Naive thymus-derived CD4-positive, alpha-beta T cell (primary cell): ENCODE measurements at regions of chr10 and their contacts with region 1.

Region 1: GRCh38 chr10:7872041-7872442 is 53.7 kb downstream of the TAF3 start:
- DNase-seq: peak in 6 of 9 donors; percentile 9 to 51 (median 44)
- ATAC-seq: peak; percentile 54
- H3K4me3 ChIP-seq: no peak overlapping the region
- H3K4me3 Mint-ChIP-seq: peak overlapping the region; percentile 8 to 84 (median 74)
- H3K27ac ChIP-seq: no peak overlapping the region
- H3K27ac Mint-ChIP-seq: peak overlapping the region in 3 of 9 donors; percentile 16 to 48 (median 41)
- H3K4me1 ChIP-seq: peaks cover 0 to 3% of the 10 kb centered on the region in 2 donors
- H3K4me1 Mint-ChIP-seq: peaks cover 6 to 61% (median 31%) of the 10 kb centered on the region in 7 donors
- H3K27me3 ChIP-seq: no peaks in the 10 kb centered on the region
- H3K27me3 Mint-ChIP-seq: no peaks in the 10 kb centered on the region

Region 2: GRCh38 chr10:8044908-8045725 is 173.1 kb after region 1 on chr10:
- CTCF ChIA-PET with region 1: no interaction called
- POLR2A ChIA-PET with region 1: no interaction called
- intact Hi-C with region 1: loop called (anchors 5 to 10 kb)
- DNase-seq: peak in 6 of 9 donors; percentile 18 to 29 (median 24)
- ATAC-seq: no peak
- H3K4me3 ChIP-seq: peak overlapping the region; percentile 26
- H3K4me3 Mint-ChIP-seq: peak overlapping the region; percentile 23 to 71 (median 59)
- H3K27ac ChIP-seq: no peak overlapping the region
- H3K27ac Mint-ChIP-seq: peak overlapping the region in 4 of 9 donors; percentile 9 to 42 (median 12)
- H3K4me1 ChIP-seq: peaks cover 56 to 59% of the 10 kb centered on the region in 2 donors
- H3K4me1 Mint-ChIP-seq: peaks cover 36 to 80% (median 64%) of the 10 kb centered on the region in 7 donors
- H3K27me3 ChIP-seq: peaks cover 54 to 86% of the 10 kb centered on the region in 2 donors
- H3K27me3 Mint-ChIP-seq: peaks cover 87 to 93% (median 90%) of the 10 kb centered on the region in 5 donors

Region 3: GRCh38 chr10:8444630-8445029 is 572.6 kb after region 1 on chr10:
- CTCF ChIA-PET with region 1: no interaction called
- POLR2A ChIA-PET with region 1: no interaction called
- intact Hi-C with region 1: loop called in 1 of 2 experiments (anchors 1 kb)
- DNase-seq: peak in 8 of 9 donors; percentile 14 to 63 (median 44)
- ATAC-seq: peak; percentile 94
- H3K4me3 ChIP-seq: no peak overlapping the region
- H3K4me3 Mint-ChIP-seq: no peak overlapping the region
- H3K27ac ChIP-seq: no peak overlapping the region
- H3K27ac Mint-ChIP-seq: peak overlapping the region in 3 of 9 donors; percentile 23 to 70 (median 65)
- H3K4me1 ChIP-seq: peaks cover 0 to 6% of the 10 kb centered on the region in 2 donors
- H3K4me1 Mint-ChIP-seq: peaks cover 0 to 17% (median 5%) of the 10 kb centered on the region in 7 donors
- H3K27me3 ChIP-seq: peaks cover 0 to 2% of the 10 kb centered on the region in 2 donors
- H3K27me3 Mint-ChIP-seq: peaks cover 0 to 36% (median 0%) of the 10 kb centered on the region in 5 donors

Region 4: GRCh38 chr10:8473205-8473604 is 601.2 kb after region 1 on chr10:
- CTCF ChIA-PET with region 1: no interaction called
- POLR2A ChIA-PET with region 1: no interaction called
- intact Hi-C with region 1: loop called (anchors 1 to 5 kb)
- DNase-seq: peak in 7 of 9 donors; percentile 8 to 61 (median 36)
- ATAC-seq: peak; percentile 51
- H3K4me3 ChIP-seq: no peak overlapping the region
- H3K4me3 Mint-ChIP-seq: no peak overlapping the region
- H3K27ac ChIP-seq: no peak overlapping the region
- H3K27ac Mint-ChIP-seq: no peak overlapping the region
- H3K4me1 ChIP-seq: no peaks in the 10 kb centered on the region
- H3K4me1 Mint-ChIP-seq: peaks cover 0 to 3% (median 0%) of the 10 kb centered on the region in 7 donors
- H3K27me3 ChIP-seq: no peaks in the 10 kb centered on the region
- H3K27me3 Mint-ChIP-seq: peaks cover 8 to 46% (median 25%) of the 10 kb centered on the region in 5 donors

Region 5: DNA sequence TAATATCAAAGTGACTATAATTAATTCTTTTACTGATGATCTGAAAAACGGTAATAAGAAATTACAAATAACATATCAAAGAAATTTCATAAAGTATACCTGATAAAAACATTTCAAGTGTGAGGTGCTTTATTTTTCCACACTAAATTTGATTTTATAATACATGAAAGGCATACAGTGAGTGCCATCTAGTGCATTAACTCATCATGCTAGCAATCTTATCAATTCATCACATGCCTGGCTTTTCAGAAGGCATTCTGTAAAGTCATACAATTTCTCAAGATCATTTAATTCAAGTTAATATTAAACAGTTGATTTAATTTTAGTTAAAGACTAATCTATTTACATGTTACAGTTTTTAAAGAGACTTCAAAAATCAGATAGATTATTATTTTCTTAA is 1203.4 kb after region 1 on chr10:
- CTCF ChIA-PET with region 1: no interaction called
- POLR2A ChIA-PET with region 1: no interaction called
- intact Hi-C with region 1: loop called in 1 of 2 experiments (anchors 2 kb)
- DNase-seq: no peak
- ATAC-seq: no peak
- H3K4me3 ChIP-seq: no peak overlapping the region
- H3K4me3 Mint-ChIP-seq: no peak overlapping the region
- H3K27ac ChIP-seq: no peak overlapping the region
- H3K27ac Mint-ChIP-seq: no peak overlapping the region
- H3K4me1 ChIP-seq: no peaks in the 10 kb centered on the region
- H3K4me1 Mint-ChIP-seq: peaks cover 0 to 5% (median 0%) of the 10 kb centered on the region in 7 donors
- H3K27me3 ChIP-seq: no peaks in the 10 kb centered on the region
- H3K27me3 Mint-ChIP-seq: peaks cover 0 to 6% (median 4%) of the 10 kb centered on the region in 5 donors

Region 6: DNA sequence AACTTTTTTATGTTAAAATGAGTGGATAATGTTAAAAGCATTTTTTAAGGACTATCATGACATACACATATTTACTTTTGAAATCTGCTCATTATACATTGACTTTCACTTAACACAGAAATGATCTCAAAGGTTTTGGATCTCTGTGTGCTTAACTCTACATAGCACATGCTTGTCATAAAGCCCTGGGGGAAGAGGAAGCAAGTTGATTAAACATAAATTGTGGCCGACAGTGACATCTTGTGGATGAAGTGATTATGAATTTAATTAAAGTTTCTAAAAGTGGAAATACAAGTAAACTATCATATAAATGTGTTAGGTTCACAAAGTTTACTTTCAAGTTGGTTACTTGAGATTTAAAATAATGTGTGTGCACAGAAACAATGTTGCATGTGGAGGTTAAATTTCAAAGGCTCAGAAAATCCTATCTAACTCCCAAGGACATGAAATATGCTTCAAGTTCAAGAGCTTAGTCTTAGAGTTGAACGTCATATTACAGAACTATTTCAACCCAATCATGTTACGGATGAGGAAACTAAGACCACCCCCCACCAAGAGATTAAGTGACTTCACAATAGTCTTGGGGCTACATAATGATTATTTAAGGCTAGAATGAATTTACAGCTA is 1430.2 kb after region 1 on chr10:
- CTCF ChIA-PET with region 1: interaction called, 3 read pairs
- POLR2A ChIA-PET with region 1: no interaction called
- intact Hi-C with region 1: loop called (anchors 1 kb)
- DNase-seq: peak in 7 of 9 donors; percentile 21 to 62 (median 53)
- ATAC-seq: peak; percentile 68
- H3K4me3 ChIP-seq: no peak overlapping the region
- H3K4me3 Mint-ChIP-seq: no peak overlapping the region
- H3K27ac ChIP-seq: no peak overlapping the region
- H3K27ac Mint-ChIP-seq: no peak overlapping the region
- H3K4me1 ChIP-seq: no peaks in the 10 kb centered on the region
- H3K4me1 Mint-ChIP-seq: peaks cover 0 to 3% (median 0%) of the 10 kb centered on the region in 7 donors
- H3K27me3 ChIP-seq: no peaks in the 10 kb centered on the region
- H3K27me3 Mint-ChIP-seq: peaks cover 0 to 10% (median 5%) of the 10 kb centered on the region in 5 donors

Region 7: GRCh38 chr10:9579110-9579705 is 1707.2 kb after region 1 on chr10:
- CTCF ChIA-PET with region 1: no interaction called
- POLR2A ChIA-PET with region 1: no interaction called
- intact Hi-C with region 1: no loop called
- DNase-seq: no peak
- ATAC-seq: no peak
- H3K4me3 ChIP-seq: no peak overlapping the region
- H3K4me3 Mint-ChIP-seq: no peak overlapping the region
- H3K27ac ChIP-seq: no peak overlapping the region
- H3K27ac Mint-ChIP-seq: no peak overlapping the region
- H3K4me1 ChIP-seq: no peaks in the 10 kb centered on the region
- H3K4me1 Mint-ChIP-seq: no peaks in the 10 kb centered on the region
- H3K27me3 ChIP-seq: no peaks in the 10 kb centered on the region
- H3K27me3 Mint-ChIP-seq: peaks cover 0 to 11% (median 2%) of the 10 kb centered on the region in 5 donors